ENCODE measurements at regions of chr5 and their contacts with region 1.

Region 1: GRCh38 chr5:86983208-86983607 is 284.5 kb upstream of the RASA1 start:
- DNase-seq: no peak
- ATAC-seq: no peak
- H3K4me3 Mint-ChIP-seq: no peak overlapping the region
- H3K27ac Mint-ChIP-seq: no peak overlapping the region
- H3K4me1 Mint-ChIP-seq: no peaks in the 10 kb centered on the region
- H3K27me3 Mint-ChIP-seq: peaks cover under 1% of the 10 kb centered on the region
- CTCF ChIP-seq: no peak

Region 2: DNA sequence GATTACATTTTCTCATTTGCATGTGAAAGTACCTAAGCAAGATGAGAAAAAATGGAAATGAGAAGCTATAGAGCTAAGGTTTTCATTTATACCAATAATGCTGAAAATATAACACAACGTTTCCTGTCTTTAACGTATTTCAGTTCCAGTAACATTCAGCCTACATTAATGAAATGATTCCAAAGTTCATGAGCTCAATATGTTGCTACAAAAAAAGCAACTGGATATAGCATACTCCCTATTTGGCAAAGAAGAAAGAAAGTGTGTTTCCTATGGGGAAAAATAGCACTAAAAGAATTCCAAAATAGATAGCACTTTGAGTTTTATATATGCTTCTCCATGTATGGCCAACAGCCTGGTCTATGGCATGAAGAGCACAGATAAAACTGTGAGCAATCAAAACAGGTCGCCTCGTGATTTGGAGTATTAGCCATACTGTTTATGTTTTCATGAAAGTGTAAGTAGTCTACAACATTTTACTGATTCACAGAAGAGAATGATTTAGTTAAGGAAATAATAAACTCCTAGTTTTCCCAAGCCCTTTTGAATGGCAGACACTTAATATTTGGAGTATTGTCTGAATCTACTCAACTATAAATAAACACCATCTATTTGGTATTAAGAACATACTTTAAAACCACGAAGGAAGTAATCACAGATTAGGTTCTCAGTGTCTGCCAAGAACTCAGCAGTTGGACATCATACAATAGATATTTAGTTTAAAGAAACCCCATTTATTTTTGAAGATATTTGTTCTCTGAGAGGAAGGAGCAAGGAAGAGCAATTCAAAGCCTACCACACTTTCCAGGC is 25.7 kb after region 1 on chr5:
- CTCF ChIA-PET with region 1: interaction called, 11 read pairs
- POLR2A ChIA-PET with region 1: no interaction called
- intact Hi-C with region 1: no loop called
- DNase-seq: no peak
- ATAC-seq: no peak
- H3K4me3 Mint-ChIP-seq: no peak overlapping the region
- H3K27ac Mint-ChIP-seq: no peak overlapping the region
- H3K4me1 Mint-ChIP-seq: no peaks in the 10 kb centered on the region
- H3K27me3 Mint-ChIP-seq: no peaks in the 10 kb centered on the region
- CTCF ChIP-seq: no peak

Measured in activated CD8-positive, alpha-beta T cell treated with anti-CD3 and anti-CD28 coated beads for 36 hours (primary cell).